ENCODE measurements at regions of chr6 and their contacts with region 1.

Region 1: GRCh38 chr6:21064756-21065340 is 528.7 kb upstream of the SOX4 start:
- DNase-seq: no peak
- ATAC-seq: no peak
- H3K4me3 ChIP-seq: no peak overlapping the region
- H3K27ac ChIP-seq: no peak overlapping the region
- H3K4me1 ChIP-seq: peaks cover 0 to 8% (median 0%) of the 10 kb centered on the region in 12 donors
- H3K27me3 ChIP-seq: no peaks in the 10 kb centered on the region
- CTCF ChIP-seq: no peak
- POLR2A ChIP-seq: no peak

Region 2: DNA sequence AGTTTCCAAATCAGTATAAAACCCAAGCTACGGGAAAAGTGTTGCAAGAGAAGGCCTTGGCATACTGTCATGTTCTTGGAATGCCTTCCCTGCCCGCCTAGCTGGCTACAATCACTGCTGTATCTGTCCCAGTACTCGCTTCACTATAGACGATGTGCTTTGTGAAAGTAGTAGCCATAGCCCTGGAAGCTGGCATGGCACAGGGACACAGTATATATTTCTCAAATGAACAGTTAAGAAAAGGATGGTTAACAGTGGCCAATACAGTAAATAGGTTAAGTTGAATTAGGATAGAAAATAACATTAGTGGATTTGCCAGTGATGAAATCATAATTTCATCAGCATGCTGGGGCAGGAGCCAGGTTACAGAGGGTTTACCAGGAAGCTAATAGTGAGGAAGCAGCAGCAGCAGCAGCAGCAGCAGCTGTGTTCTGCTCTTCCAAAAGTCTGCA is 31.2 kb before region 1 on chr6:
- intact Hi-C with region 1: loop called in 1 of 10 experiments (anchors 5 kb)
- DNase-seq: peak in 4 of 5 donors; percentile 23 to 55 (median 30)
- ATAC-seq: peak; percentile 51 to 94 (median 79)
- H3K4me3 ChIP-seq: no peak overlapping the region
- H3K27ac ChIP-seq: peak overlapping the region in 4 of 12 donors; percentile 29 to 46 (median 40)
- H3K4me1 ChIP-seq: peaks cover 0 to 5% (median 0%) of the 10 kb centered on the region in 12 donors
- H3K27me3 ChIP-seq: no peaks in the 10 kb centered on the region
- CTCF ChIP-seq: no peak
- POLR2A ChIP-seq: no peak

Measured in heart left ventricle (tissue), 16 donors.